Endothelial cell of umbilical vein (primary cell): ENCODE measurements at regions of chr2 and their contacts with region 1.

Region 1: DNA sequence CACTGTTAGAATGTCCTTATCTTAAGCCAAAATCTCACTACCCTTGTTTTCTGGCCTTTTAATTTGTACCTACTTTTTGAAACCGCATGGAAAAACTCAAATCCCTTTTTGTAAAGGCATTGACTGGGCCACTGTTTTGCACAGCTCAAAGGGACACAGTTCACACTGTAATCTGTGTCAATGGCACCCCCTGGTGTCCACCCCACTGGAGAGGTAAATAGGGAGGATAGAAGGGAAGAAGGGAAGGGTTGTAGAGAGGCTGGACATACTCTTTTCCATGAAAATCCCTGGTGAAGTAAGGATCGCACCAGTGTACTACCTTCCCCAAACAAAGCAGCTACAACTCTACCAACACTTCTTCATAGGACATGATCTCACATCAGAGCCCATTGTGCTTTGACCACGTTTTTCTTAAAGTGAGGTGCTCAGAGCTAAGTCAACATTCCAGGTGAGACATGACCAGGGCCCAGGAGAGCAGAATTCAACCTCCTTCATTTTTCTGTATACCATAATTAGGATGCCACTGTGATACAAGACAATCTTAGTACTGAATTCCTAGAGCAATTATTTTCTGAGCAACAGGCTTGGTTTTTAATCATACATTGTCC is 92.4 kb upstream of the RMDN2 start:
- DNase-seq: peak; percentile 85
- H3K4me3 ChIP-seq: no peak overlapping the region
- H3K27ac ChIP-seq: no peak overlapping the region
- H3K4me1 ChIP-seq: peaks cover 30% of the 10 kb centered on the region
- H3K27me3 ChIP-seq: no peaks in the 10 kb centered on the region
- CTCF ChIP-seq: peak; percentile 71 to 77
- POLR2A ChIP-seq: no peak

Region 2: DNA sequence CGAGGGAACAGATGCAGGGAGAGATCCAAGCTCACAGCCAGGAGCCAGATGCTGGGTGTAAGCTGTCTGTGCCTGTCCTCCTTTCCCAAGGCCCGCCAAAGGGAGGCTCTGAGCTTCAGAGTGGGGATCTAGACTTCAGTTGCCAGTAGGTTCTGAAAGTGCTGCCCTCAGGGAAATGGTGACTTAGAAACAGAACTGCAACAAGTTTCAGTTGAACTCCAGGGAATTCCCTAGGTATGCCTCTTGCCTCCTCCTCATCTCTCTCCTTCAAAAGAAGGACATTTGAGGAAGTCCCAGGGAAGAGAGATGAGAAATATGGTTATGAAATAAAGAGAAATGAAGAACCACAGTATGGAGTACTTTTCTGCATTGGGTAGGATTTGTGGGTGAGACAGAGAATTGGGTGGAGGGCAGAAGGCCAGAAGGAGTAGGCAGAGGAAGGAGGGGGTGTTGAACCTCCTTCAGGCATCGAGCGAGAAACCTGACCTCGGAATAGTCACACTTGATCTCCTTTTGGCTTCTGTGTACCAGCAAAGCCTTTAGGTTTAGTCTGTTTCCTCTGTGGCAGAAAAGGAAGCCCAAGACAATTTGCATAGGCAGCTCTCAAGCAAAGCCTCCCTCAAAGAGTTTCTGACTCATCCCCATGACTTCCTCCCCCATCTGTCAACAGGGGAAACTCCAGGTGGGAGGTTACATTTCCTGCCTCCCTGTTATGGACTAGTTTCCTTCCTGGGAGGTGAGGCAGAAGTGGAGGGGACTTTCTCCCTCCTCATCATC is 442.5 kb before region 1 on chr2:
- CTCF ChIA-PET with region 1: interaction called, 201 read pairs
- POLR2A ChIA-PET with region 1: no interaction called
- dilution Hi-C with region 1: no loop called
- intact Hi-C with region 1: loop called (anchors 1 kb)
- DNase-seq: peak; percentile 88
- H3K4me3 ChIP-seq: no peak overlapping the region
- H3K27ac ChIP-seq: peak overlapping the region; percentile 78
- H3K4me1 ChIP-seq: peaks cover 28% of the 10 kb centered on the region
- H3K27me3 ChIP-seq: no peaks in the 10 kb centered on the region
- CTCF ChIP-seq: no peak
- POLR2A ChIP-seq: peak; percentile 82

Region 3: GRCh38 chr2:37454851-37455762 is 377.6 kb before region 1 on chr2:
- CTCF ChIA-PET with region 1: interaction called, 10 read pairs
- POLR2A ChIA-PET with region 1: no interaction called
- dilution Hi-C with region 1: no loop called
- intact Hi-C with region 1: loop called (anchors 1 kb)
- DNase-seq: peak; percentile 95
- H3K4me3 ChIP-seq: no peak overlapping the region
- H3K27ac ChIP-seq: peak overlapping the region; percentile 99
- H3K4me1 ChIP-seq: peaks cover 67% of the 10 kb centered on the region
- H3K27me3 ChIP-seq: no peaks in the 10 kb centered on the region
- CTCF ChIP-seq: no peak
- POLR2A ChIP-seq: peak; percentile 9

Region 4: GRCh38 chr2:37561615-37562569 is 270.8 kb before region 1 on chr2:
- CTCF ChIA-PET with region 1: interaction called, 5 read pairs
- POLR2A ChIA-PET with region 1: no interaction called
- dilution Hi-C with region 1: no loop called
- intact Hi-C with region 1: loop called (anchors 5 kb)
- DNase-seq: peak; percentile 92
- H3K4me3 ChIP-seq: peak overlapping the region in 1 of 3 experiments; percentile 9
- H3K27ac ChIP-seq: peak overlapping the region; percentile 91
- H3K4me1 ChIP-seq: peaks cover 42% of the 10 kb centered on the region
- H3K27me3 ChIP-seq: no peaks in the 10 kb centered on the region
- CTCF ChIP-seq: no peak
- POLR2A ChIP-seq: no peak

Region 5: DNA sequence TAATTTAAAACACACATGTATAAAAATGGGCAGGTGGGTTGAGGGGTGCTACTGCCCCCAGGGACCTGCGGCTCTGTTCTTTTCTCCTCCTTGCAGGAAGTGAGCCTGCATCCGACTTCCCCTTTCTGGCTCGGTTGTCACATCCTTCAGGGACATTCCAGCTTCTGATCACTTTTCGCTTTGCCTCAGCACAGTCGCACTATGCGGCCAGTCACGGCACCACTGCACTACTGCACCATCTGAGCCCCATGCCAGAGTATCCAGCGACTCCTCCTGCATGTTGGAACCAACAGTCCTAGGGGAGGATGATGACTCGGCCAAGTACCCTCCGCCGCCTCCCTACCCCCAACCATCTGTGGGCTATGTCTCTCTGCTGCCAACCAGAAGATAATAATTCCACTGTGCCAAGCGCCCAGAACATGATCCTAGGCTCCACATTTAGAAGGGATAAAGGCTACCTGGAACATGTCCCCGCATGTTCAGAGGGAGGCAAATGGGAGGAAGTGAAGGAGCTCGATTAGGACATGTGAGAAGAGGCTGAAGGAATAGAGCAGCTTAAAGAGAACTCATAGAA is 178.8 kb before region 1 on chr2:
- CTCF ChIA-PET with region 1: interaction called, 22 read pairs
- POLR2A ChIA-PET with region 1: no interaction called
- dilution Hi-C with region 1: no loop called
- intact Hi-C with region 1: loop called (anchors 1 kb)
- DNase-seq: no peak
- H3K4me3 ChIP-seq: no peak overlapping the region
- H3K27ac ChIP-seq: peak overlapping the region; percentile 97
- H3K4me1 ChIP-seq: peaks cover 79% of the 10 kb centered on the region
- H3K27me3 ChIP-seq: no peaks in the 10 kb centered on the region
- CTCF ChIP-seq: no peak
- POLR2A ChIP-seq: peak; percentile 6

Region 6: DNA sequence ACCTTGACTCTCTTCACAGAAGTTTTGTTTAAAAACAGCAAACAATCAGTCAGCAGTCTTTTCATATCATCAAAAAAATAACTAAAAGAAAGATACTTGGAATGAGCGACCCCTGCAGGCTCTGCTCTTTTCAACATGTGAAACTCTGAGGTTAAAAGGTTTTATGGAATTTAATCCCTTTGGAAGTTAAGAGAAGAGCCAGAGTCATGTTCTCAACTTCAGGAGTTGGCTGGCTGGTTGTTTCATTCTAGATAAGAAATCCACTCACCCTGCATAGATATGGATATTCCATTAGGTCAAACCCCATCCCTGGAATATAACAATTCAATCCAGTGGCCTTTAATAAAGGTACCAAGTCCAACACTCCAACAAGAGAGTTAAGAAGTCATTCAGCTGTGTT is 23.2 kb before region 1 on chr2:
- CTCF ChIA-PET with region 1: interaction called, 24 read pairs
- POLR2A ChIA-PET with region 1: no interaction called
- dilution Hi-C with region 1: no loop called
- intact Hi-C with region 1: loop called (anchors 1 kb)
- DNase-seq: peak; percentile 77
- H3K4me3 ChIP-seq: no peak overlapping the region
- H3K27ac ChIP-seq: no peak overlapping the region
- H3K4me1 ChIP-seq: peaks cover 13% of the 10 kb centered on the region
- H3K27me3 ChIP-seq: no peaks in the 10 kb centered on the region
- CTCF ChIP-seq: peak; percentile 42 to 45
- POLR2A ChIP-seq: no peak

Region 7: GRCh38 chr2:37925063-37925897 is 92.6 kb after region 1 on chr2 and contains the start of gene RMDN2:
- CTCF ChIA-PET with region 1: no interaction called
- POLR2A ChIA-PET with region 1: no interaction called
- dilution Hi-C with region 1: no loop called
- intact Hi-C with region 1: no loop called
- DNase-seq: peak; percentile 89
- H3K4me3 ChIP-seq: peak within 1 kb of the TSS; percentile 53 to 94 (median 70)
- H3K27ac ChIP-seq: peak within 1 kb of the TSS; percentile 48
- H3K4me1 ChIP-seq: peaks cover 4% of the 10 kb centered on the region
- H3K27me3 ChIP-seq: peaks cover 7 to 11% of the 10 kb centered on the region in 2 experiments
- CTCF ChIP-seq: peak in 1 of 2 donors; percentile 13
- POLR2A ChIP-seq: peak; percentile 95
- total RNA-seq, gene RMDN2: 1.8 and 2.8 TPM in 2 replicates